ENCODE measurements at regions of chr10 and their contacts with region 1.

Region 1: GRCh38 chr10:100986952-100987750 is at the starts of genes MRPL43 and TWNK:
- DNase-seq: peak; percentile 97
- H3K4me3 ChIP-seq: peak within 1 kb of the TSS; percentile 76 to 92 (median 90)
- H3K27ac ChIP-seq: peak within 1 kb of the TSS; percentile 77 to 86 (median 82)
- H3K4me1 ChIP-seq: peaks cover 22 to 51% (median 38%) of the 10 kb centered on the region in 4 donors
- H3K27me3 ChIP-seq: no peaks in the 10 kb centered on the region
- CTCF ChIP-seq: peak in 1 of 3 experiments; percentile 8
- EP300 ChIP-seq: no peak
- POLR2A ChIP-seq: no peak
- total RNA-seq, gene MRPL43: 54.4 to 98.8 (median 82.4) TPM
- total RNA-seq, gene TWNK: 3.7 to 11.1 (median 9.0) TPM

Region 2: DNA sequence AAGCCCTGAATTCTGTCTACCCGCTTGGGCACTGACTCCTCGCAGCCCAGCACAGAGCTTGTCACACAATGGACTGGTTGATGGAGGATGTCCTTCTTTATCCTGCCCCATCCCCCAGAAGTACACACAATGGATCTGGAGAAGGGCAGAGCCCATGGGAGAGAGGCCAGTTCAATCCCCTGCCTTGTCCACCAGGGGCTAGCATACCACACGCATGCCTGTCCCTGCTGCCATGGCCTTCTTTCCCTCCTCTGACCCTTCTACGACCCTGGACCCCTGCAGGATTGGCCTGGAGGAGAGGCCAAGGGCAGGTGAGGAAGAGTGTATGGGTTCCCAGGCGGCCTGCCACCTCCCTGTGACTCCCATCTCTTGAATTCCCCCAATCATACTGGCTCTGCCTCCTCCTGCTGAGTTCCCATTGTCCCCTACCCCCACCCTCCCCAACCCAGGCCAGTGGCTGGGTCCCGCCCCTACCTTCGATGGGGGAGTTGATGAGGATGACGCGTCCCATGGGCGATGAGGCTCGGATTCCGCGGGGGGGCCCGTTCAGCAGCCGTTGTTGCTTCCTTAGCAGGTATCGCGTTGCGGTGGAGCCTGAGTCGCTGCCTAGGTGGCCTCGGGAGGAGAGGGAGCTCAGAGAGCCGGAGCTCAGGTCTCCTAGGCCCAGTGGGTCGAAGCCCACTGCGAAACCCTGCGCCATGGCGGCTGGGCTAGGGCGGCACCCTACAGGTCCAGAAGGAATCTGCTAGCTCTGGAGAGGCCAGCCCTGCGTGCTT is 42.6 kb after region 1 on chr10:
- intact Hi-C with region 1: loop called (anchors 5 kb)
- DNase-seq: no peak
- H3K4me3 ChIP-seq: no peak overlapping the region
- H3K27ac ChIP-seq: no peak overlapping the region
- H3K4me1 ChIP-seq: peaks cover 23 to 37% (median 31%) of the 10 kb centered on the region in 4 donors
- H3K27me3 ChIP-seq: no peaks in the 10 kb centered on the region
- CTCF ChIP-seq: no peak
- EP300 ChIP-seq: no peak
- POLR2A ChIP-seq: no peak